Right ventricle myocardium inferior (tissue), 1 donor: ENCODE measurements at regions of chr9 and their contacts with region 1.

Region 1: GRCh38 chr9:127423934-127424675 is at the start of gene ZNF79:
- DNase-seq: peak; percentile 97
- ATAC-seq: peak; percentile 97
- total RNA-seq, gene ZNF79: 6.1 TPM

Region 2: DNA sequence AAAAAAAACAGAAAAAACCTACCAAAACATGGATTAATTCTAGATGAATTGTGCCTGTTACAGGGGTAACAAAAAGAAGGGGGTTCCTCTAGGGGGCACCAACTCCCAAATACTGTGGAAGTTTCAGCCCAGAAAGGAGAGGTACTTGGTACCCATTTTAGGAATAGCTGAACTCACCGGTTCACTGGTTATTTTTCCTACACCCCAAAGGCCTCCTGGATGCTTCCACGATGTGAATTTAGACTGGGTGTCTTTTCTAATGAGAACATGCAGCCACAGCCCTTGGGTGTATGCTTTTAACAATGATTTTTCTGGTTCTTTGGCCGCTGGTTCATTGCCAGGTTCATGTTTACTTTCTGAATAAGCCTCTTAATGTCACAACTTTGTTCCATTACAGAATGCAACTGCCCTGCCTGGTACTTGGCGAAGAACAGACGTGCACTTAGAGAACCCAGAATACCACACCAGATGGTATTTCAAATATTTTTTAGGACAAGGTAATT is 112.8 kb before region 1 on chr9:
- intact Hi-C with region 1: loop called (anchors 10 kb)
- DNase-seq: no peak
- ATAC-seq: peak; percentile 41

Region 3: GRCh38 chr9:127450830-127451724 is 27.0 kb after region 1 on chr9 and contains the starts of genes LRSAM1 and RPL12:
- intact Hi-C with region 1: loop called (anchors 2 kb)
- DNase-seq: peak; percentile 98
- ATAC-seq: peak; percentile 78
- total RNA-seq, gene LRSAM1: 52.0 TPM
- total RNA-seq, gene RPL12: 775 TPM

Region 4: GRCh38 chr9:127555768-127556397 is 131.8 kb after region 1 on chr9:
- intact Hi-C with region 1: no loop called
- DNase-seq: peak; percentile 79
- ATAC-seq: peak; percentile 41

Region 5: DNA sequence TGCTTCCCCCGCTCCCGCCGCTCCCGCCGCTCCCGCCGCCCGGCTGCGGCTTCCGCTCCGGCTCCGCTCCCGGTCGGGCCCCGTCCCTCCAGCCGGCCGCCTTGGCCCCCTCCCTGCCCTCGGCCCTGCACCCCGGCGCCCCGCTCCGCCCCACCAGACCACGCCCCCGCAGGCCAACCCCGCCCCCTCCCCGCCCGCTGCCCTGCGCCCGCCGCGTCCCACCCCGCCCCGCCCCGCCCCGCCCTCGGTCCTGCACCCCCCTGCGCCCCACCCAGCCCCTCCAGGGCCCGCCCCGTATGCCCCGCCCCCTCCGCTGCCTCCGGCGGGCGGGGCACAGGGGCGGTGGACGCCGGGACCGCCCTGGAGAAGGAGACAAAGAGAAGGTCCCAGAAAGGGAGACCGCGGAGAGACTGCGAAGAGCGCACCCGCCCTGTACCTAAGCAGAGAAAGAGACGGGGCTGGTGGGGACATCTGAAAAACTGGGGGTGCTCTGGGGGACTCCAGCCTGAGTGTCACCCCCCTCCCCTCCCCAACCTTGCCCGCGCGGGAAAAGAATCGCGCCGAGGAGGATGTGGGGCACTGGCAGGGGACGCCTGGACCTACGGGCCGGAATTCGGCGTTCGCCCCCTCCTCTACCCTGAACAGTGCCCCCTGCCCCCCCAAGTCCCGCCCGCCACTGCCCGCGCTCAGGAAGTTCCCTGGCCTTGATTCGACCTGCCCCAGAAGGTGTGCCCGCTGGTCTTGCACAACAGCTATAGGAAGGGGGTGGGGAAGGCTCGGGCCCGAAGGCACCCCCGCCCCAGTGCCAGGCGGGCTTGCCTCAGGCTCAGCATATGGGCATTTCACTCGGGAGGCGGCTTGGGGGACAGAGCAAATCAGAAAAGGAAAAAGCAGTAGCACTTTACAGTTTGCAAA is 145.1 kb after region 1 on chr9:
- intact Hi-C with region 1: loop called (anchors 1 kb)
- DNase-seq: peak; percentile 85
- ATAC-seq: peak; percentile 92